ENCODE measurements at regions of chr7 and their contacts with region 1.

Region 1: DNA sequence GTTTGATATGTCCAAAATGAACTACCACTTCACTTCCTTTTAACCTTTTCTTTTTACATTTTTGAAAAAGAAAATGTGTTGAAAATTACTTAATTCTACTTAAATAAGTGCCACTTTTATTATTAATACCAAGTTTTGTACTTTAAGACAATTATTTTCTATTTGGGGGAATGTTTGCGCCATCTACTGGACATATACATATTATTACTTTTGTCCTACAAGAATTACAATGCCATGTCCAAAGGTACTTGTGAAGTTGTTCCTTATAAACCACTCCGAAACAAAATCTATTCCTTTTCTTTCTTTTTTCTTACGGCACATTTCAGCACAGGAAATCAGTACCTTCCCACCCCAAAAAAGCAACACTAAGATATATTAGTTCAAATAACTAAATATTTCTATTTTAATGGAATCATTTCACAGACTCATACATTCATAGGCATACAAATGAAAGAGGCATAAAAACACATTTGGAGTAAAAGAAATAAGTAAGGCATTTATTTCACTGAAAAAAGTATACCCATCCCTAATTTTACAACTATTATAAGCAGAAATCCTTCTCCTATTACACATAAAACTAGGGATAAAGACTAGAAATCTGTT is 169.9 kb downstream of the RNF133 start:
- DNase-seq: peak; percentile 21
- ATAC-seq: no peak
- H3K4me3 ChIP-seq: no peak overlapping the region
- H3K27ac ChIP-seq: no peak overlapping the region
- H3K4me1 ChIP-seq: no peaks in the 10 kb centered on the region
- H3K27me3 ChIP-seq: no peaks in the 10 kb centered on the region
- CTCF ChIP-seq: peak; percentile 52
- EP300 ChIP-seq: no peak
- POLR2A ChIP-seq: no peak
- RAD21 ChIP-seq: no peak

Region 2: GRCh38 chr7:122092964-122093797 is 435.8 kb before region 1 on chr7:
- CTCF ChIA-PET with region 1: interaction called, 6 read pairs
- POLR2A ChIA-PET with region 1: no interaction called
- in situ Hi-C with region 1: loop called (anchors 10 kb)
- intact Hi-C with region 1: loop called (anchors 1 kb)
- DNase-seq: peak; percentile 64
- ATAC-seq: peak; percentile 83
- H3K4me3 ChIP-seq: no peak overlapping the region
- H3K27ac ChIP-seq: no peak overlapping the region
- H3K4me1 ChIP-seq: no peaks in the 10 kb centered on the region
- H3K27me3 ChIP-seq: no peaks in the 10 kb centered on the region
- CTCF ChIP-seq: peak; percentile 75
- EP300 ChIP-seq: no peak
- POLR2A ChIP-seq: no peak
- RAD21 ChIP-seq: no peak

Region 3: DNA sequence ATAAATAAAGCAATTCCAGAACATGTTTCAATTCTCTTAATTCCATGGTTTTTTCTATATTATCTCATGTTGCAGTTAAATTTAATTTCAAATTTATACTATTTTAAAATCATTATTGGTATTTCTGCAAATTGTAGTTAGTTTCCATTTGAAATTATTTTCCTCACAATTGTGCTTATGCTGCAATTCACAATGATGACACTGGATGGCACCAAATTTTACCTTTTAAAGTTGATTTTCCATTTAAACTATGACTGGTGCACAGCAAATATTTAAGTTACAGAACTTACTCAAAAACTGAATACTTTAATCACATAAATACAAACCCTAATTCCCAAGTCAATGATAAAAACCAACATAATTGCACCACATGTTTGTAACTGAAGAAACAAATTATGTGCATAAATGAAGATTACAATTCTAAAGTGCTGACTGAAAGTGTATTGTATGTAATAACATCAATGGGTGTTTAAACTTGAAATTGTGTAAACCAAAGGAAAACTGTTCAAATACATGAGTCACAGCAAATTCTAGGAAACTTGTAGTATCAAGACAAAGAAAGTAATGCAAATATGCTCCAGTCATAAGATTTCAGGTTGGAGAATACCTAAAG is 309.6 kb before region 1 on chr7:
- CTCF ChIA-PET with region 1: interaction called, 18 read pairs
- POLR2A ChIA-PET with region 1: no interaction called
- in situ Hi-C with region 1: loop called (anchors 5 kb)
- intact Hi-C with region 1: loop called (anchors 1 kb)
- DNase-seq: peak; percentile 13
- ATAC-seq: no peak
- H3K4me3 ChIP-seq: no peak overlapping the region
- H3K27ac ChIP-seq: no peak overlapping the region
- H3K4me1 ChIP-seq: peaks cover 9% of the 10 kb centered on the region
- H3K27me3 ChIP-seq: no peaks in the 10 kb centered on the region; a peak in 1 of 5 replicates
- CTCF ChIP-seq: peak; percentile 64
- EP300 ChIP-seq: no peak
- POLR2A ChIP-seq: no peak
- RAD21 ChIP-seq: peak; percentile 52; the same call in 1 of the 2 replicates

Region 4: DNA sequence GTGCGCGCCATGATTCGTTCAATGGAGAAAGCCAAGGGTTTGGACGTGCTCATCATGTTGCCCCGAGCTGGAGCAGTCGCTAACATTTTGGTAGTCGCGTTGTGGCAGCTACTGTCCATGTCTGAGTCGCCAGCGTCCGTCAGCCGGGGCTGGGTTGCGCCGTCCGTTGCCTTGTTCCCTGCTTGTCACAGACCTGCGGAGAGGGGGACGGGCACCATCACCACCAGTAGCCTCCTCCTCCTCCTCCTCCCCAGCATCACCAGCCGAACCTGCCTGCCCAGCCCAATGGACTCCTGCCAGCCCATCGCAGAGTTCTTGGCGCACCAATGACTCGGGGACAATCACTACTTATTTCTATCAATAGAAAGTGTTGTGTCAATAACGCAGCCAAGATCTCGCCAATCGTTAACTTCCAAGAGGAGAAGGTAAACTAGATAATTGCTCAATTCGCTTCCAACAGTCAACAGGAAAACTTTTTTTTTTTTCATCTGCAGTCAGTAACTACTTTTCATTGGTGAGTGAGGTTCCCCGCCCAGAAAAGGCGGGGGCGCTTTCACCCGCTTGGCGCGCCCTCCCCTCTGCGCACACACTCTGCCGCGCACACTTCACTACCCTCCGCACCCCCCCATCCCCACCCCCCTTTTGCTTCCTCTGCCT is 224.5 kb before region 1 on chr7 and contains the start of gene FEZF1:
- CTCF ChIA-PET with region 1: no interaction called
- POLR2A ChIA-PET with region 1: no interaction called
- in situ Hi-C with region 1: no loop called
- intact Hi-C with region 1: loop called (anchors 5 kb)
- DNase-seq: peak; percentile 30
- ATAC-seq: peak; percentile 54
- H3K4me3 ChIP-seq: peak within 1 kb of the TSS in 2 of 3 experiments; percentile 30 to 43; a peak in 4 of 6 replicates
- H3K27ac ChIP-seq: no peak within 1 kb of the TSS
- H3K4me1 ChIP-seq: peaks cover 15% of the 10 kb centered on the region
- H3K27me3 ChIP-seq: peaks cover 15 to 88% of the 10 kb centered on the region in 2 experiments
- CTCF ChIP-seq: no peak
- EP300 ChIP-seq: no peak
- POLR2A ChIP-seq: no peak
- RAD21 ChIP-seq: no peak
- total RNA-seq, gene FEZF1: not detected in 2 replicates